H1 (cell line): ENCODE measurements at regions of chr2 and their contacts with region 1.

Region 1: DNA sequence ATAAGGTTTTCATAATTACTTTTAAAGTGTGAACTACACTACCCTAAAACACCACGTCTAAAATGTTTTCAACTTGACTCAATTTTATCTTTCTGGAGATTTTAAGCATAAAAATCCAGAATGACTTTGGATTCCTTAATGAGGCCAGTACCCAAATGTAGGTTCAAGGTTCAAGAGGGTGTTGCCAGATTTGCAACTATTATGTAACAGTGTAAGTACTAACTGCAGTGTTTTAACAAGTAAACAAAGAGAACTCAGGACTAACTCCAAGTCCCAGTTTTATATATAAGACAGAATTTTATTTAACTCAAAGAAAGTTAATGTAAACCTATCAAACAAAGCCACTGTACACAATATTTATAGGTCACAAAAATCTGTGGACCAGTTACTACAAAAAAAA is 5.7 kb downstream of the HIBCH start:
- DNase-seq: no peak
- H3K4me3 ChIP-seq: no peak overlapping the region
- H3K27ac ChIP-seq: no peak overlapping the region
- H3K4me1 ChIP-seq: peaks cover 0 to 5% (median 1%) of the 10 kb centered on the region in 4 experiments; a peak in 3 of 7 replicates
- H3K27me3 ChIP-seq: no peaks in the 10 kb centered on the region
- CTCF ChIP-seq: no peak
- EP300 ChIP-seq: no peak
- POLR2A ChIP-seq: no peak
- RAD21 ChIP-seq: no peak

Region 2: DNA sequence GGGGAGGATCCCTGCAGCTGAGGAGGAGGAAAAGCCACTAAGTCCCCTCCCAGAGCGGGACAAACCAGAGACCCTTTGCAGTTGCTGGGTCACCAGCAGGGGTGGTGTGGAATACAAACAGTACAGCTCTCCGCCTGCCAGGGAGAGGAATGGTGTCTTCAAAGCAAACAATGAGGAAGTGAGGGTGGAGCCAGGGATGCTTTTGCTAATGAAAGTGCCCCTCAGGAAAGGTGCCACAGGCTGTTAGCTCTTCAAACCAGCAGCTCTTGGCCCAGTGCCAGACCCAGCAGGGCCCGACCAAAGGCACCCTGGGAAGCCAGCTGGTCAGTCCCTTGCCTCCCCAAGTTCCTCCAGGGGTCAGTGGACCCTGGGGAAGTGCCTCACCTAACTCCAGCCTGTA is 97.1 kb before region 1 on chr2:
- CTCF ChIA-PET with region 1: interaction called, 11 read pairs
- POLR2A ChIA-PET with region 1: no interaction called
- DNase-seq: peak; percentile 29 to 58
- H3K4me3 ChIP-seq: no peak overlapping the region; a peak in 1 of 8 replicates
- H3K27ac ChIP-seq: no peak overlapping the region; the same call in 1 of the 2 replicates
- H3K4me1 ChIP-seq: peaks cover 11 to 30% (median 17%) of the 10 kb centered on the region in 4 experiments
- H3K27me3 ChIP-seq: peaks cover 0 to 1% (median 0%) of the 10 kb centered on the region in 4 experiments; a peak in 1 of 7 replicates
- CTCF ChIP-seq: peak in 2 of 3 experiments; percentile 3 to 32; a peak in 2 of 4 replicates
- EP300 ChIP-seq: no peak
- POLR2A ChIP-seq: no peak
- RAD21 ChIP-seq: peak in 1 of 2 experiments; percentile 5; a peak in 2 of 4 replicates

Region 3: DNA sequence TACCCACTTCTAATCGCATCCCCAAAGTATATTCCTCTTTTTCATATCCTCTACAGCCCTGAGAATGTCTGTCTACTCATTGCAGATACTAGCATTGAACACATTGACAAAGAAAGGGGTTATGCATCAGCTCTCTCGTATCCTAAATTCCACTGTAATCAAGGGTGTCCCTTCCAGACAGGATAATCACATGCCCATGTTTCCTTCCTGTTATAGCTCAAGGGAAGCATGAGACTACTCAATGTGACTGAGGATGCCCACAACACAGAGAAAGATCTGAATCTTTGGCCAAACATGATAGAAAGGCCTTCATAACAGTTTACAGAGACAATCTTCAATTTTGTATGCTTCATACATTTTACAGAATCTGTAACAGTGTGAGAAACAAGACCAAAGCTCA is 63.5 kb before region 1 on chr2:
- CTCF ChIA-PET with region 1: no interaction called
- POLR2A ChIA-PET with region 1: no interaction called
- DNase-seq: no peak
- H3K4me3 ChIP-seq: no peak overlapping the region
- H3K27ac ChIP-seq: no peak overlapping the region
- H3K4me1 ChIP-seq: no peaks in the 10 kb centered on the region
- H3K27me3 ChIP-seq: peaks cover 0 to 1% (median 0%) of the 10 kb centered on the region in 4 experiments; a peak in 1 of 7 replicates
- CTCF ChIP-seq: no peak
- EP300 ChIP-seq: no peak
- POLR2A ChIP-seq: no peak
- RAD21 ChIP-seq: no peak

Region 4: GRCh38 chr2:190301032-190301431 is 12.8 kb before region 1 on chr2:
- CTCF ChIA-PET with region 1: interaction called, 12 read pairs
- POLR2A ChIA-PET with region 1: no interaction called
- DNase-seq: no peak
- H3K4me3 ChIP-seq: no peak overlapping the region
- H3K27ac ChIP-seq: no peak overlapping the region
- H3K4me1 ChIP-seq: peaks cover 0 to 2% (median 0%) of the 10 kb centered on the region in 4 experiments; a peak in 1 of 7 replicates
- H3K27me3 ChIP-seq: no peaks in the 10 kb centered on the region
- CTCF ChIP-seq: no peak
- EP300 ChIP-seq: no peak
- POLR2A ChIP-seq: no peak
- RAD21 ChIP-seq: no peak